ENCODE measurements at regions of chr20 and their contacts with region 1.

Region 1: DNA sequence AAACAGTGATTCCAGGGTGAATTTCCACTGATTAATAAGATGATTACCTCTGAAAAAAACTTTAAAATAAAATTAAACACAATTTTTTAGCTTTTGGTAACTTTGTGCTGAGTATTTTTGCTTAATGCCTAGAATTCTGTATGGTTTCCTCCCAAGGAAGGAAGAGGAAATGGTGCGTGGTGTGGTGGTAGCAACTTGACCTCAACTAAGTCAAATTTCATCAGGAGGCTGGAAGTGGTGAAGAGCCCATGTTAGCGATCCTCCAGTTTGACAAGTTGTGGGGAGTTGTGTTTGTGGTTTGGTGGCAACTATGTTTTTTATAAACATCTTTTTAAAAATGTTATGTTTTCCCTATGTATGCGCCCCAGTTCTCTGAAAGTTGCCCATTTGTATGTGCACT is 5.0 kb upstream of the RTF2 start:
- DNase-seq: no peak
- H3K4me3 Mint-ChIP-seq: no peak overlapping the region
- H3K27ac Mint-ChIP-seq: no peak overlapping the region
- H3K4me1 Mint-ChIP-seq: no peaks in the 10 kb centered on the region
- H3K27me3 Mint-ChIP-seq: peaks cover 16% of the 10 kb centered on the region
- CTCF ChIP-seq: no peak

Region 2: DNA sequence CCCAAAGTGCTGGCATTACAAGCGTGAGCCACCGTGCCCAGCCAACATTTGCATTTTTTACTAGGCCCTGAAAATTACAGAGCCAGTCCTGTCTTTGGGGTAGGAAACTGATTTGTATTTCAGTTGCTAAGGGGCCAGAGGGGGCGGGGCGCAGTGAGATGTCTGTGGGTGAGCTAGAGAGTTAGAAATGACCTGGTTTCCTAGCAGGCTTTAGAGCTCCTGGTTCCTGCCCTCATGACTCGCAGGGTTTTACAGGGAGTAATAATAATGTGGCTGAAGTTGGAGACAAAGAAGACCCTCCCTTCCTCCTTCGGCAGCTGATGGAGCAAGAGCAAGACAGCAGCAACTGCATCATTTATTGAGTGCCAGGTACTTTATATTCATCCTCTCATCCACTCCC is 297.2 kb after region 1 on chr20:
- CTCF ChIA-PET with region 1: interaction called, 10 read pairs
- intact Hi-C with region 1: no loop called
- DNase-seq: no peak
- H3K4me3 Mint-ChIP-seq: no peak overlapping the region
- H3K27ac Mint-ChIP-seq: no peak overlapping the region
- H3K4me1 Mint-ChIP-seq: no peaks in the 10 kb centered on the region
- H3K27me3 Mint-ChIP-seq: peaks cover 22% of the 10 kb centered on the region
- CTCF ChIP-seq: no peak